ENCODE measurements at regions of chr11 and their contacts with region 1.

Region 1: DNA sequence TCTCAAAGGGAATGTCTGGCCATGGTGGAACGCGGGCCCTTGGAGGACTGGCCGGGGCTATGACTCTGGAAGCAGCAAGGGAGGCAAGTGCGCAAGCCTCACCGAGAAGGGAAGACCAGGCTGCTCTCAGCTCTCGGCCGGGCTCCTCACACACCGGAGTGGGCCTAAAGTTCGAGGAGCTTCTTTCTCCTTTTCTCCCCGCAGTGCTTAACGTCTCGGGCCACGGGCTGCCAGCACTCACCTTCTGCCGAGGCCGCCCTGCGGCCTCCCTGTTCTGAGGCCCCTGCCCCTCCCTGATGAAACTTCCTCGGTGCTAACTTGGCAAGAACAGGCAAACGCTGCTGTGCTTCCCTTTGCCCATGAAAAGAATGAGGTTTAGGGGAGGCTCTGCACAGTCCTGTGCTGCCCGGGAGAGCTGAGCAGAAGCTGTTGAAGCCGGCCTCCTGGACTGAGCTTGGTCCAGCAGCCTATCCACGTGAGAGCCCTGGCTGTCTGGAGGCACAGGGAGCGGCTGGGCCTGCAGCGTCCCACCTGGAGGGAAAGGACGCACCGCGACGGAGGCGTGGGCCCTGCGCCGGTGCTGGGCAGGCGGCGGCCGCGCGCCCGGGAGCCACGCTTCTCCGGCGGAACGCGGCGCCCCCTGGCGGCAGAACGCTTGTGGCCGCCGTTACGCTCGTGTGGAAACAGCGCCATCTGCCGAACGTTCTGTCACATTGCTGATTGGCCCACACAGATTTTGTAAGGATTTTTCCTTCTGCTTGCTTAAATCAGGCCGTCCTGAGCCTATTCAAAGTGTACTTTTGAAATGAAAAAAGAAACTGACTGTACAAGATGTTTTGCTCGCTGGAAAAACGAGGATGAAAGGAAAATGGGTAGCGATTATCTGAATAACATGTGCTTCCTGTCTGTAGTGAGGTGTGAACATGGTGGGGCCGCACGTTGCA is 65.0 kb upstream of the TMEM45B start:
- DNase-seq: peak; percentile 58 to 81 (median 78)
- H3K4me3 ChIP-seq: no peak overlapping the region
- H3K4me3 Mint-ChIP-seq: peak overlapping the region in 6 of 8 donors; percentile 20 to 64 (median 50)
- H3K27ac ChIP-seq: no peak overlapping the region
- H3K27ac Mint-ChIP-seq: peak overlapping the region in 1 of 7 donors; percentile 21
- H3K4me1 ChIP-seq: peaks cover 6% of the 10 kb centered on the region
- H3K4me1 Mint-ChIP-seq: peaks cover 0 to 7% (median 4%) of the 10 kb centered on the region in 4 donors
- H3K27me3 ChIP-seq: no peaks in the 10 kb centered on the region
- H3K27me3 Mint-ChIP-seq: no peaks in the 10 kb centered on the region

Region 2: GRCh38 chr11:129364143-129364654 is 386.4 kb before region 1 on chr11:
- CTCF ChIA-PET with region 1: interaction called, 19 read pairs
- POLR2A ChIA-PET with region 1: no interaction called
- intact Hi-C with region 1: loop called (anchors 1 kb)
- DNase-seq: peak; percentile 63 to 73 (median 69)
- H3K4me3 ChIP-seq: no peak overlapping the region
- H3K4me3 Mint-ChIP-seq: no peak overlapping the region
- H3K27ac ChIP-seq: no peak overlapping the region
- H3K27ac Mint-ChIP-seq: no peak overlapping the region
- H3K4me1 ChIP-seq: peaks cover 4% of the 10 kb centered on the region
- H3K4me1 Mint-ChIP-seq: no peaks in the 10 kb centered on the region
- H3K27me3 ChIP-seq: peaks cover 6% of the 10 kb centered on the region
- H3K27me3 Mint-ChIP-seq: peaks cover 25 to 32% of the 10 kb centered on the region in 2 donors

Region 3: DNA sequence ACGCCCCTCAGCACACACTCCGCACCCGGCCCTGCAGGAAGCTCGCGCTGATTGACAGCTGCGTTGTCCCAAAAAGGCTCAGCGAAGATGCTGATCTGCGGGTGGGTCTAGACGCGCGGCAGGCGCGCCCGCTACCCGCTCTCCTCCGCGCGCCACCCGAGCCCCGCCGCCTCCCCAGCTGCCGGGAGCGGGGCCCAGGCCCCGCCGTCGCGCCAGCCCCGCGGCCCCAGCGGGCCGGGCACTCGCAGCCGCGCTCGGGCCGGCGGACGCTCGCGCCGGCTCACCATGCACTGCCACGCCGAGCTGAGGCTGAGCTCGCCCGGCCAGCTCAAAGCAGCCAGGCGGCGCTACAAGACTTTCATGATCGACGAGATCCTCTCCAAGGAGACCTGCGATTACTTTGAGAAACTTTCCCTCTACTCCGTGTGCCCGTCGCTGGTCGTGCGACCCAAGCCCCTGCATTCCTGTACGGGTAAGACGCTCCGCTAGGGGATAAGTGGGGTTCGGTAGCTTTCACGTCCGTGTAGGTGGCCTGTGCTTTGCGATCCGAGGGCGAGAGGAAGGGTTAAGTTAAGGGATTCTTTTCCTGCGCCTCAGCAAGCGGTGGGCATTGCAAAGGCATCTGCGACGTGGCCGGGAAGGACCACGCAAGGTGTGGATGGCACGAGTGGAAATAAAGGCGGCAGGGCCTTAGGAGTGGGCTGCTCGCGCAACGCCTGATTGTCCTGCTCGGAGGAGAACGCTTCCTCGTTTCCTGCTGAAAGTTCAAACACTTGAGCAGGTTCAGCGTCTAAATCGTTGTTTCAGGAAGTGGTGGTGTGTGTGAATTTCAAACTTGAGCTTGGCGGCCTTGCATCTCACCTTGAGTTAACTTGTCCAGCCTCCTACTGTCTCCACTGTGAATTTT is 374.6 kb before region 1 on chr11 and contains the start of gene BARX2:
- CTCF ChIA-PET with region 1: no interaction called
- POLR2A ChIA-PET with region 1: no interaction called
- intact Hi-C with region 1: loop called (anchors 5 kb)
- DNase-seq: no peak
- H3K4me3 ChIP-seq: no peak within 1 kb of the TSS
- H3K4me3 Mint-ChIP-seq: peak within 1 kb of the TSS; percentile 41 to 85 (median 61)
- H3K27ac ChIP-seq: no peak within 1 kb of the TSS
- H3K27ac Mint-ChIP-seq: peak within 1 kb of the TSS in 1 of 7 donors; percentile 24
- H3K4me1 ChIP-seq: peaks cover 16% of the 10 kb centered on the region
- H3K4me1 Mint-ChIP-seq: peaks cover 11 to 39% (median 25%) of the 10 kb centered on the region in 4 donors
- H3K27me3 ChIP-seq: peaks cover 16% of the 10 kb centered on the region
- H3K27me3 Mint-ChIP-seq: peaks cover 54 to 63% of the 10 kb centered on the region in 2 donors
- total RNA-seq, gene BARX2: not detected

Region 4: GRCh38 chr11:129695575-129696308 is 54.9 kb before region 1 on chr11:
- CTCF ChIA-PET with region 1: interaction called, 25 read pairs
- POLR2A ChIA-PET with region 1: no interaction called
- intact Hi-C with region 1: loop called (anchors 5 kb)
- DNase-seq: peak; percentile 48 to 60 (median 59)
- H3K4me3 ChIP-seq: peak overlapping the region; percentile 46 to 69
- H3K4me3 Mint-ChIP-seq: peak overlapping the region; percentile 76 to 90 (median 84)
- H3K27ac ChIP-seq: no peak overlapping the region
- H3K27ac Mint-ChIP-seq: peak overlapping the region in 4 of 7 donors; percentile 39 to 66 (median 50)
- H3K4me1 ChIP-seq: peaks cover 6% of the 10 kb centered on the region
- H3K4me1 Mint-ChIP-seq: peaks cover 7 to 19% (median 9%) of the 10 kb centered on the region in 4 donors
- H3K27me3 ChIP-seq: no peaks in the 10 kb centered on the region
- H3K27me3 Mint-ChIP-seq: no peaks in the 10 kb centered on the region

Region 5: DNA sequence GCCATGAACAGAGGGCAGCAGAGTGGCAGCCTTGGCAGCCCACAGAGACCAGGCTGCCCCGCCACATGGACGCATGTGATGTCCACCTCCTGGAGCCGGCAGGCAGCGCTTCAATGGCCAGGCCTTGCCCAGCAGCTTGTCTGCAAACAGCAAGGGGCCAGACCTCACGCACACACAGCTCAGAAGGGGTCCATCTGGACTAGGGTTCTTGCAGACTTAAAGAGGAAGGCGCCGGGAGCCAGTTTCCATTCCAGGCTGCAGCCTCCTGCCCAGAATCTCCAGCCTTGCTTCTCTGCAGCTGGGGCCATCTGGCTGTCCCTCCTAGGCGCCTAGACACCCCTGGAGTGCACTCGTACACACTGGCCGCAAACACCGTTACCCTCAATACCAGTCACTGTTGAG is 26.9 kb before region 1 on chr11:
- CTCF ChIA-PET with region 1: interaction called, 10 read pairs
- POLR2A ChIA-PET with region 1: no interaction called
- intact Hi-C with region 1: no loop called
- DNase-seq: no peak
- H3K4me3 ChIP-seq: no peak overlapping the region
- H3K4me3 Mint-ChIP-seq: peak overlapping the region in 1 of 8 donors; percentile 11
- H3K27ac ChIP-seq: no peak overlapping the region
- H3K27ac Mint-ChIP-seq: peak overlapping the region in 2 of 7 donors; percentile 7 to 16
- H3K4me1 ChIP-seq: peaks cover 10% of the 10 kb centered on the region
- H3K4me1 Mint-ChIP-seq: peaks cover 11 to 13% (median 12%) of the 10 kb centered on the region in 4 donors
- H3K27me3 ChIP-seq: no peaks in the 10 kb centered on the region
- H3K27me3 Mint-ChIP-seq: no peaks in the 10 kb centered on the region

Region 6: DNA sequence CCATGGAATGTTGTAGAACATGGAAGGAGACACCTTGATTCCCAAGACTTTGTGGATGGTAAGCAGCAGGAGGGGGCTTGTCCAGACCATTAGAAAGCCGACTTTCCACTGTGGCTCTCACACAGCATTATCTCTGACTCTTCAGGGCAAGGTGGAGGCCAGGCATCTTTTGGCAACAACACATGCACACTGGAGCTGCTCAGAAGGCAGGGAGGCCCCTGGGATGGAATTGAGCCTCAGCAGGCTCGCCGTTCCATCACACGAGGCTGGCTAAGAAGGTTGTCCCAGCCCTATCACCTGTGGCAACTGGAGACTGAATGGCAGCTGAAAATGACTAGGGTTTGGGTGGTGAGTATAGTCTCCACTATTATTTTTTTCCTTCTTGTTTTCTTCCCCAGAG is 11.3 kb before region 1 on chr11:
- CTCF ChIA-PET with region 1: interaction called, 13 read pairs
- POLR2A ChIA-PET with region 1: no interaction called
- intact Hi-C with region 1: no loop called
- DNase-seq: no peak
- H3K4me3 ChIP-seq: no peak overlapping the region
- H3K4me3 Mint-ChIP-seq: no peak overlapping the region
- H3K27ac ChIP-seq: no peak overlapping the region
- H3K27ac Mint-ChIP-seq: no peak overlapping the region
- H3K4me1 ChIP-seq: no peaks in the 10 kb centered on the region
- H3K4me1 Mint-ChIP-seq: peaks cover 0 to 4% (median under 1%) of the 10 kb centered on the region in 4 donors
- H3K27me3 ChIP-seq: no peaks in the 10 kb centered on the region
- H3K27me3 Mint-ChIP-seq: peaks cover 0 to 2% of the 10 kb centered on the region in 2 donors

Region 7: DNA sequence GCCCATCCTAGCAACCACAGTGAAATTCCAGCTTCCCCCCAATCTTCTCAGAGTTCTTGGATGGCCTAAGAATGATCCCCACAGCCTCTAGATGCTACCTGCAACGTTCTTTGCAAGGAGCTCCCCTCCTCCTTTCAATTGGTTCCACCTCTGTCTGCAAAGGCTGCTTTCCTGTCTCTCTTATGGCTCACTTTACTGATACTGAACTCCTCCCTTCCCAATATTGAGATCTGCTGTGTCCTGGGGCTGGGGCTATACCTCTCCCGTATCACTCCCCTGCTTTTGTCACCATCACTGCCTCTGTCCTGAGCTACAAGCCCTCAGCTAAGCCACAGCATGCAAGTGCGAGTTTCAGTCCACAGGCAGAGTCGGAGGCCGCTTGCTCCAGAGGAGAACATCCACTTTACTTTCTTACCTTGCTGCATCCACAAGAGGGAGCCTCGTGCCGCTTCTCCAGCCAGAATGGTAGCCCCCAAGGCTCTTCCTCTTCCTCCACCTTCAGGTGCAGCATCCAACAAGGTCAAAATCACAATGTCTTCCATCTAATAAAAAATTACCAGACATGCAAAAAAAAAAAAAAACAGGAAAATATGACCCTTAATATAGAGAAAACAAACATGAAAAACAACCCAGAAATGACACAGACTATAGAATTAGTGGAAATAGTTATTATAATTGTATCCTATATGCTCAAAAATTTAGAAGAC is 16.4 kb after region 1 on chr11:
- CTCF ChIA-PET with region 1: interaction called, 14 read pairs
- POLR2A ChIA-PET with region 1: no interaction called
- intact Hi-C with region 1: no loop called
- DNase-seq: peak in 4 of 5 donors; percentile 12 to 39 (median 22)
- H3K4me3 ChIP-seq: no peak overlapping the region
- H3K4me3 Mint-ChIP-seq: peak overlapping the region in 3 of 8 donors; percentile 37 to 73 (median 52)
- H3K27ac ChIP-seq: no peak overlapping the region
- H3K27ac Mint-ChIP-seq: peak overlapping the region in 2 of 7 donors; percentile 26 to 61
- H3K4me1 ChIP-seq: no peaks in the 10 kb centered on the region
- H3K4me1 Mint-ChIP-seq: peaks cover 0 to 4% (median 4%) of the 10 kb centered on the region in 4 donors
- H3K27me3 ChIP-seq: no peaks in the 10 kb centered on the region
- H3K27me3 Mint-ChIP-seq: peaks cover 0 to 2% of the 10 kb centered on the region in 2 donors

Measured in CD4-positive, alpha-beta memory T cell (primary cell).